CD8-positive, alpha-beta memory T cell (primary cell): ENCODE measurements at regions of chr1 and their contacts with region 1.

Region 1: GRCh38 chr1:225467193-225468020 is 39.6 kb upstream of the LBR start:
- DNase-seq: peak; percentile 73 to 88 (median 86)
- H3K4me3 ChIP-seq: peak overlapping the region; percentile 84
- H3K4me3 Mint-ChIP-seq: peak overlapping the region; percentile 88 to 96 (median 92)
- H3K27ac ChIP-seq: peak overlapping the region; percentile 90
- H3K27ac Mint-ChIP-seq: peak overlapping the region; percentile 92 to 100 (median 98)
- H3K4me1 ChIP-seq: peaks cover 29% of the 10 kb centered on the region
- H3K4me1 Mint-ChIP-seq: peaks cover 47 to 65% (median 55%) of the 10 kb centered on the region in 3 donors
- H3K27me3 ChIP-seq: no peaks in the 10 kb centered on the region
- H3K27me3 Mint-ChIP-seq: peaks cover 0 to 3% of the 10 kb centered on the region in 2 donors

Region 2: DNA sequence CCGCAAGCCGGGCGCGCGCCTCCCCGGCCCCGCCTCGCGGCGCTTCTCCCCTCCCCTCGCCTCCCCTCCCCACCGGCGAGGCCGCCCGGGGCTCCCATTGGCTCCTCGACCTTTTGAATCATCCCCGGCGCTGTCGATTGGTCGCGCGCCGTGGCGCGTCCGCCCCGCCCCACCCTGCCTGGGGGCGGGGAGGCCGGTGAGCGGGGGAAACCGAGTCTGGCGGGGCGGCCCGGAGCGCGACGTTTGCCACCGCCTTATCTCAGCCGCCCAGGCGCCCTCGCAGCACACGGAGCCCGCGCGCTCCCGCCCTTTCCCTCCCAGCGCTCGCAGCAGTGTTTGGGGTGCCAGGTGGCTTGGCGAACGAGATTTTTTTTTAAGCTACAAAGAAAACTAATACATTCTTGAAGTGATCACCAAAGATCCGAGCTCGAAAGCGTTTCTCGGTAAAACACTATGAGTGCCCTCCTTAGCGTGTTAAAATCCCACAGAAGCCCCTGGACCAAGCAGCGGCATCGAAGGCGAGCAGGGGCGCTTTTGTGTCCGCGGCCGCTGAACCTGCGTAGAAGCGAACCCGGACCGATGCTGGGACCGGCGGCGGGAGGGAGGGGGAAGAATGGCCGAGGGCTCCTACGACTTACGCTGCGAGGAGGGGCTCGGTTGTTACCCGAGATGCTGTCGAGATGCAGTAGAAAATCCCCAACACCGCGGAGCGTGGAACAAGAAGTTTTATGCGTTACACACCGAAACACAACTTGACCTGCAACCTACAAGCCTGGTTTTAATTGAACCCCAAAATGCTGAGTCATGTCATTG is 39.1 kb before region 1 on chr1:
- CTCF ChIA-PET with region 1: interaction called, 12 read pairs
- POLR2A ChIA-PET with region 1: interaction called, 47 read pairs
- DNase-seq: peak; percentile 88 to 95 (median 89)
- H3K4me3 ChIP-seq: peak overlapping the region; percentile 88
- H3K4me3 Mint-ChIP-seq: peak overlapping the region; percentile 86 to 95 (median 91)
- H3K27ac ChIP-seq: peak overlapping the region; percentile 86
- H3K27ac Mint-ChIP-seq: peak overlapping the region; percentile 87 to 96 (median 93)
- H3K4me1 ChIP-seq: peaks cover 41% of the 10 kb centered on the region
- H3K4me1 Mint-ChIP-seq: peaks cover 42 to 46% (median 46%) of the 10 kb centered on the region in 3 donors
- H3K27me3 ChIP-seq: no peaks in the 10 kb centered on the region
- H3K27me3 Mint-ChIP-seq: no peaks in the 10 kb centered on the region